PC-3 (cell line): ENCODE measurements at regions of chr14 and their contacts with region 1.

Region 1: DNA sequence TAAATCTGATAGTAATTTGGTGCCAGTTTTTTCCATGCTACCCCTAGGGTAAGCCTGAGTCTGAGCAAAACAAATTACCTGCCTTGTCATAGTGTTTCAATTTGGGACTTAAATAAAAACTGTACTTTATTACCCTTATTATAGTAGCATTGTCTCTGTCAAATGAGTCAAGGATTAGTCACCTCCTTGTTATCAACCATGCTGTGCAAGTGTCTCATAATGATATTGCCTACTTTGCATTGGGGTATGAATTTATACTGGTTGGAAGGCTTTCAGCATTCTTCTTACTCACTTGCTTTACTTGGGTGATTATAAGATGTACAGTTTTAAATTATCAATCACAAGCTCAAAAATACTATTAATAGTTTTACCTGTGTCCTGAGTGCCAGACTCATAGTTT is 380.1 kb downstream of the LRFN5 start:
- DNase-seq: peak; percentile 75
- ATAC-seq: peak; percentile 99
- H3K4me3 ChIP-seq: no peak overlapping the region
- H3K27ac ChIP-seq: no peak overlapping the region
- H3K4me1 ChIP-seq: peaks cover 16% of the 10 kb centered on the region
- H3K27me3 ChIP-seq: no peaks in the 10 kb centered on the region
- CTCF ChIP-seq: no peak

Region 2: GRCh38 chr14:41925409-41925808 is 61.3 kb before region 1 on chr14:
- CTCF ChIA-PET with region 1: no interaction called
- POLR2A ChIA-PET with region 1: no interaction called
- intact Hi-C with region 1: loop called (anchors 1 kb)
- DNase-seq: peak; percentile 63
- ATAC-seq: peak; percentile 97
- H3K4me3 ChIP-seq: no peak overlapping the region
- H3K27ac ChIP-seq: no peak overlapping the region
- H3K4me1 ChIP-seq: no peaks in the 10 kb centered on the region
- H3K27me3 ChIP-seq: no peaks in the 10 kb centered on the region
- CTCF ChIP-seq: peak; percentile 73

Region 3: GRCh38 chr14:41950428-41951151 is 36.1 kb before region 1 on chr14:
- CTCF ChIA-PET with region 1: no interaction called
- POLR2A ChIA-PET with region 1: no interaction called
- intact Hi-C with region 1: no loop called
- DNase-seq: no peak
- ATAC-seq: no peak; the same call in 1 of the 2 replicates
- H3K4me3 ChIP-seq: no peak overlapping the region
- H3K27ac ChIP-seq: no peak overlapping the region
- H3K4me1 ChIP-seq: no peaks in the 10 kb centered on the region
- H3K27me3 ChIP-seq: no peaks in the 10 kb centered on the region
- CTCF ChIP-seq: no peak

Region 4: DNA sequence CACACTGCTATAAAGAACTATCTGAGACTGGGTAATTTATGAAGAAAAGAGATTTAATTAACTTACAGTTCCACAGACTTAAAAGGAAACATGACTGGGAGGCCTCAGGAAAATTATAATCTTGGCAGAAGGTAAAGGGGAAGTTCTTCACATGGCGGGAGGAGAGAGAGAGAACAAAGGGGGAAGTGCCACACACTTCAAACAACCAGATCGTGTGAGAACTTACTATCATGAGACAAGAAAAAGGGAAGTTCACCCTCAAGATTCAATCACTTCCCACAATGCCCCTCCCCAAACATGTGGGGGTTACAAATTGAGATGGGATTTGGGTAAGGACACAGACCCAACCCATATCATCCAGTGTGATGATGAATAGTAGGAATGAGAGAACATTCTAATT is 13.5 kb before region 1 on chr14:
- CTCF ChIA-PET with region 1: no interaction called
- POLR2A ChIA-PET with region 1: no interaction called
- intact Hi-C with region 1: no loop called
- DNase-seq: no peak
- ATAC-seq: no peak
- H3K4me3 ChIP-seq: no peak overlapping the region
- H3K27ac ChIP-seq: no peak overlapping the region
- H3K4me1 ChIP-seq: no peaks in the 10 kb centered on the region
- H3K27me3 ChIP-seq: no peaks in the 10 kb centered on the region
- CTCF ChIP-seq: no peak